ENCODE measurements at regions of chr6 and their contacts with region 1.

Region 1: DNA sequence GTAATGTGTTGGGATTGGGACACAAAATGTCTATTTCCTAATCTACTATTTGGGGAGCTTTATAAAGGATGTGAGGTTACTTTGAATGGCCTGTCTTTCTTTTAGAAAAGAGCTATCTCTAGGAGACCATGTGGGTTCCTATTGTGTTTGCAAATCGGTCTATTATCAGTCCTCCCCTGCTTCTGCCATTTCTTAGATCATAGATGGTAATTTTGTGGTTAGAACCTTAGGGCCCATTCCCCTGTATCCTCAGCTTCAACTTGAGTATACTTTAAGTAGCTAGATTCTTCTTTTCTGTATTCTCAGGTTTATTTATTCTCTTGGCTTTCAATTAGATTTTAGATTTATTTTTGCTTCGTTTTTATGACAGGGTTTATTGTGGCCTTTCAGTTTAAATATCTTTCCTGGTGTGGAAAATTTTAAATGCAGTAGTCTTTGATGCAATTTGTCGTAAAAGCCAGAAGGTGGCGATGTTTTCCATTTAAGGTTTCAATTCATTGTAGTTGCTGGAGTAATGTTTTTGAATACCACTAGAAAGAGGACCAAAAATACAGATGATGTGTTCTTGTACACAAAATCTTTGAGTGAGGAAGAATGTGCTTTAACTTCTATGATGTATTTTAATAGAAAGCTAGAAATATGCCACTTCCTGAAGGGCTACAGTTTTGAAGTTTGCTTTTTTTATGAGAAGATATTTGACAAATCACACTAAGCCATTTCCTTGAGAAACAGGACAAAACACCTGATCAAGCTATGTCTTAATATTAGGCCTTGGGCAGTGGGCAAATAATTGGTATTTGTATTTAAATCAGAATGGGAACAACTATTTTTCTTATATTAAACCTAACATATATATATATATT is 20.3 kb downstream of the TBPL1 start:
- DNase-seq: no peak
- ATAC-seq: no peak

Region 2: DNA sequence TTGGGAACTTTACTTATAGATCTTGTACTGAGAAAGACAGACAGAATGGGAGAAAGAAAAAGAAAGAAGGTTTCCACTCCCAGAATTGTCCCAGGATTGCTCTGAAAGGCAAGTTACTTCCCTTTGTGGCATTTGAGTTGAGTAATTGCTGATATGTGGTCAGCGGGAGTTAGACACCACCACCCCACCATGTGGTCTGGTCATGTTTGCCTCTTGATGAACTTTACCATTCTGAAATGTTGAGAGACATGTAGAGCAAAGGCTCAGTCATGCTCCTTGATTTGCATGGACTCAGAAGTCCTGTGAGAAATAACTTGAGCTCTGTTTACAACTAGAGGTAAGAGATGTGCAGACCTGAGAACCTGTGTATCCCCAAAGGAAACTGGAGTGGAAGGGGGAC is 67.3 kb before region 1 on chr6:
- intact Hi-C with region 1: no loop called
- DNase-seq: no peak
- ATAC-seq: no peak

Region 3: GRCh38 chr6:133952815-133953633 is 20.3 kb before region 1 on chr6 and contains the start of gene TBPL1:
- intact Hi-C with region 1: loop called (anchors 2 kb)
- DNase-seq: peak; percentile 96
- ATAC-seq: peak; percentile 98
- total RNA-seq, gene TBPL1: 14.5 TPM

Measured in Right ventricle myocardium inferior (tissue), 1 donor.